ENCODE measurements at regions of chr17 and their contacts with region 1.

Region 1: GRCh38 chr17:40168262-40168832 is 8.9 kb upstream of the RAPGEFL1 start:
- DNase-seq: peak in 7 of 9 experiments; percentile 6 to 83 (median 47)
- ATAC-seq: peak; percentile 92
- H3K4me3 ChIP-seq: no peak overlapping the region
- H3K4me3 Mint-ChIP-seq: no peak overlapping the region
- H3K27ac ChIP-seq: no peak overlapping the region
- H3K27ac Mint-ChIP-seq: peak overlapping the region; percentile 80
- H3K4me1 ChIP-seq: peaks cover 4% of the 10 kb centered on the region
- H3K4me1 Mint-ChIP-seq: peaks cover 9% of the 10 kb centered on the region
- H3K27me3 ChIP-seq: no peaks in the 10 kb centered on the region
- H3K27me3 Mint-ChIP-seq: no peaks in the 10 kb centered on the region
- CTCF ChIP-seq: peak; percentile 79

Region 2: GRCh38 chr17:39863918-39864746 is 304.2 kb before region 1 on chr17 and contains the start of gene IKZF3:
- CTCF ChIA-PET with region 1: no interaction called
- POLR2A ChIA-PET with region 1: no interaction called
- intact Hi-C with region 1: no loop called
- DNase-seq: peak; percentile 59 to 96 (median 78)
- ATAC-seq: peak; percentile 67
- H3K4me3 ChIP-seq: peak within 1 kb of the TSS; percentile 65 to 74
- H3K4me3 Mint-ChIP-seq: peak within 1 kb of the TSS; percentile 89
- H3K27ac ChIP-seq: peak within 1 kb of the TSS; percentile 92 to 94
- H3K27ac Mint-ChIP-seq: peak within 1 kb of the TSS; percentile 98
- H3K4me1 ChIP-seq: peaks cover 56% of the 10 kb centered on the region
- H3K4me1 Mint-ChIP-seq: peaks cover 61% of the 10 kb centered on the region
- H3K27me3 ChIP-seq: no peaks in the 10 kb centered on the region
- H3K27me3 Mint-ChIP-seq: no peaks in the 10 kb centered on the region
- CTCF ChIP-seq: peak; percentile 49
- total RNA-seq, gene IKZF3: 57.3 to 59.8 TPM

Region 3: GRCh38 chr17:40015005-40015997 is 153.0 kb before region 1 on chr17 and contains the start of gene CSF3:
- CTCF ChIA-PET with region 1: interaction called, 40 read pairs
- POLR2A ChIA-PET with region 1: no interaction called
- intact Hi-C with region 1: loop called (anchors 1 kb)
- DNase-seq: no peak
- ATAC-seq: no peak
- H3K4me3 ChIP-seq: no peak within 1 kb of the TSS
- H3K4me3 Mint-ChIP-seq: no peak within 1 kb of the TSS
- H3K27ac ChIP-seq: no peak within 1 kb of the TSS
- H3K27ac Mint-ChIP-seq: no peak within 1 kb of the TSS
- H3K4me1 ChIP-seq: peaks cover 5% of the 10 kb centered on the region
- H3K4me1 Mint-ChIP-seq: peaks cover 6% of the 10 kb centered on the region
- H3K27me3 ChIP-seq: no peaks in the 10 kb centered on the region
- H3K27me3 Mint-ChIP-seq: no peaks in the 10 kb centered on the region
- CTCF ChIP-seq: no peak
- total RNA-seq, gene CSF3: not detected

Region 4: DNA sequence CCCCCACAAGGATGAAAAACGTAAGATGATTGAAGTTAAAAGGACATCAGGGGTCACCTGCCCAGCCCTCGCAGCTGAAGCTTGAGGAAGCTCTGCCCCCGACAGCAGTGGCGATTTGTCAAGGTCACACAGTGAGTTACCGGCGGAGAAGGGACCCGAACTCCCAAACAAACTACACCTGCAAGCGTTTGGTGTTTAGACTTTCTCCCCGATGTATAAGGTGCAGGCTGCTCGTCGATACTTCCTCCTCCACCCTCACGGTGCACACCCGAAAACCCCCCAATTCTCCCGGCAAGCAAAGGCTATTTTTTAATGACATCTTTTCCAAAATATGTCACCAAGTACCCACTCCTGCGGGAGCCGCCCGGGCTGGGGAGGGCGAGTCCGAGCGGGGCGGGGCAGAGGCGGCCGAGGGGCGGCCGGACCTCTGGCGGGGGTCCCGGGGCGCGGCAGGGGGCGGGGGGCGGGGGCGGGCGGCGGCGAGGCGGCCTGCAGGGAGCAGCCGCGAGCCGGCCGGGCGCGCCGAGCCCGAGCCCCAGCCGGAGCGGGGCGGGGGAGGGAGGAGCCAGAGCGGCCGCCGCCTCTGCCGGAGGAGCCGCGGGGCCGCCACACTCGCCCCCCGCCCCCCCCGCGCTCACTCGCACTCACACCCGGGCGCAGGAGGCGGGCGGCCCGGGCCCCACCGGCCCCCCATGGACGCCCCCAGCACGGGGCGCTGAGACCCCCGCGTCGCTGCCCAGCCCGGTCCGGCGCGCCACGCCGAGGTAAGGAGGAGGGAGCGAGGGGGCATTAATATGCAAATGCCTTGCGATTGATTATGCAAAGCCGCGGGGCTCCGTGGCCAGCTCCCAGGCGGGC is 105.8 kb before region 1 on chr17 and contains the start of gene THRA:
- CTCF ChIA-PET with region 1: interaction called, 19 read pairs
- POLR2A ChIA-PET with region 1: interaction called, 5 read pairs
- intact Hi-C with region 1: loop called (anchors 2 to 5 kb)
- DNase-seq: peak; percentile 47 to 88 (median 71)
- ATAC-seq: peak; percentile 90
- H3K4me3 ChIP-seq: peak within 1 kb of the TSS; percentile 84 to 97
- H3K4me3 Mint-ChIP-seq: peak within 1 kb of the TSS; percentile 91
- H3K27ac ChIP-seq: peak within 1 kb of the TSS; percentile 49 to 64
- H3K27ac Mint-ChIP-seq: peak within 1 kb of the TSS; percentile 85
- H3K4me1 ChIP-seq: peaks cover 48% of the 10 kb centered on the region
- H3K4me1 Mint-ChIP-seq: peaks cover 45% of the 10 kb centered on the region
- H3K27me3 ChIP-seq: no peaks in the 10 kb centered on the region
- H3K27me3 Mint-ChIP-seq: no peaks in the 10 kb centered on the region
- CTCF ChIP-seq: no peak
- total RNA-seq, gene THRA: 34.6 to 35.7 TPM

Region 5: DNA sequence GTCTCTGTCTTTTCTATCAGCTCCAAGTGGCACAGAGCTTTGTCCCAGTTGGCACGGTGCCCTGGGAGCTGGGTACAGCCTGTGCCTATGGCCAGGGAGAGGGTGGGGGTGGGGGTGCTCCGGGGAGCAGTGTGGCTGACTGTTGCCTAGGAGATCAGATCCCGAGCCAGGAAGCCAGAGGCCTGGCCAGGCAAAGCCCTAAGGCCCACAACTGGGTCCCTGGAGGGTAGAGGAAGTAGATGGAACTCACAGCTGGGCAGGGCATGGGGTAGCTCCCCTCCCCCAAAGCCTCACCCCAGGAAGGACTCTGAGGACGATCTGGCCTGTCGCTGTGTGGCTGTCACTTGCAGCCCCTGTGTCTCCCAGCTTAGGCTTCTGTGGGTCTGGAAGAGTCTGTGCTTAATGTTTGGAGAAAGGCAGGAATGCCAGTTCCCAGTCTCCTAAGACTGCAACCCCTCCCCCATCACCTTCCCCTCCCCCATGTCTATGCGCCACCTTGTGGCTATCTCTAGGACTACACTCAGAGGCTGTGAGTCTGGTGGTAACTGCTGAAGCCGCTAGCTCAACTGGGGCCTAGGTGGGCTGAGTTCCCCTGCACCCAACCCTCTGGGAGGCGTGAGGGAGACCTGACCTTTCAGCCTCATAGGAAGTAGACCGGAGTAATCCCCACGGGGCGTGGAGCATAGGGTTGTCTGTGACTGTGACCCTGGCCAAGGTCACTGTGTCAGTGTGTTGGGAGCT is 93.0 kb before region 1 on chr17:
- CTCF ChIA-PET with region 1: interaction called, 15 read pairs
- POLR2A ChIA-PET with region 1: no interaction called
- intact Hi-C with region 1: no loop called
- DNase-seq: peak; percentile 48 to 81 (median 70)
- ATAC-seq: peak; percentile 96
- H3K4me3 ChIP-seq: no peak overlapping the region
- H3K4me3 Mint-ChIP-seq: peak overlapping the region; percentile 45
- H3K27ac ChIP-seq: no peak overlapping the region
- H3K27ac Mint-ChIP-seq: peak overlapping the region; percentile 62
- H3K4me1 ChIP-seq: peaks cover 49% of the 10 kb centered on the region
- H3K4me1 Mint-ChIP-seq: peaks cover 53% of the 10 kb centered on the region
- H3K27me3 ChIP-seq: no peaks in the 10 kb centered on the region
- H3K27me3 Mint-ChIP-seq: no peaks in the 10 kb centered on the region
- CTCF ChIP-seq: peak; percentile 90

Region 6: DNA sequence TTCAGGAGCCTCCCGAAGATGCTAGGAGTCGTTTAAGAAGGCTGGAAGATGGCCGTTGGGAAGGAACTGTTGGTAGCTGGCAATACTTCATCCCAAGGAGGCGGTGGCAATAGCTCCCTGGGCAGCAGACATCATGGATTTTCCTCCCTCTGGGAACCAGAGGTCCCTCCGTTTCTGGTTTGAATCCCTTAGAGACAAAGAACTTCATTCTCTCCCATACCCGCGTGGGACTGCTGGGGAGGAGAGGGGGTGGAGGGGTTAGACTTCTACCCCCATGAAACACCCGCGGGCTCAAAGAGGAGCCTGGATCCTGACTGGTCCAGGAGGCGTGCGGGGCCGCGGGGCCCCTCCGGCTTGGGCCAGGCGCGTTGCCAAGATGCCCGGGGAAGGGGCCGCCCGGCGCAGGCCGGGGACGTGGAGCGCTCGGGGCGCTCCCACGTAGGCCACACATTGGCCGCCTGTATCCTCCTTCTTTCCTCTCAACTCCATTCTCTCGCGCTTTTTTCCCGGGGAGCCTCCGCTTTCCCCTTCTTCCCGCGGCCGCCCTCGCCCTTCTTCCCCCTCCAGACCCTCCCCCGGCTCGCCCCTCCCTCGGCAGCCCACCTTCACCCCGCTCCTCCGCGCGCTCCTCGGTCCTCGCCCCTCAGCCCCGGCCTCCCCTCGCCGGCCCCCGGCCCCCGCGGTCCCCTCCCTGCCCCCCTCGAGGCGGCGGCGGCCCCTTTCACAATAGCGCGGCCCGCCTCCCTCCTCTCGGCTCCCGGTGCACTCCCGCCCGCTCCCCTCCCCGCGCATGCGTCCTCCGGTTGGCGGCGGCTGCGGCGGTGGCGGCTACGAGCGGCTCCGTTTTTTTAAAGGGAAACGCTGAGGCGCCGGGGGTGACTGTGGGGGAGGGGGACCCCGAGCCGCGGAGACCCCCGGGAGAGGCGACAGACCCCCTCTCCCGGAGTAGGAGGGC is 46.9 kb before region 1 on chr17 and contains the start of gene MSL1:
- CTCF ChIA-PET with region 1: interaction called, 118 read pairs
- POLR2A ChIA-PET with region 1: interaction called, 3 read pairs
- intact Hi-C with region 1: loop called in 1 of 2 experiments (anchors 2 kb)
- DNase-seq: peak; percentile 69 to 92 (median 85)
- ATAC-seq: peak; percentile 65
- H3K4me3 ChIP-seq: peak within 1 kb of the TSS; percentile 75 to 93
- H3K4me3 Mint-ChIP-seq: peak within 1 kb of the TSS; percentile 81
- H3K27ac ChIP-seq: peak within 1 kb of the TSS; percentile 40 to 71
- H3K27ac Mint-ChIP-seq: peak within 1 kb of the TSS; percentile 83
- H3K4me1 ChIP-seq: peaks cover 14% of the 10 kb centered on the region
- H3K4me1 Mint-ChIP-seq: peaks cover 44% of the 10 kb centered on the region
- H3K27me3 ChIP-seq: no peaks in the 10 kb centered on the region
- H3K27me3 Mint-ChIP-seq: no peaks in the 10 kb centered on the region
- CTCF ChIP-seq: no peak
- total RNA-seq, gene MSL1: 43.8 to 46.6 TPM

Region 7: DNA sequence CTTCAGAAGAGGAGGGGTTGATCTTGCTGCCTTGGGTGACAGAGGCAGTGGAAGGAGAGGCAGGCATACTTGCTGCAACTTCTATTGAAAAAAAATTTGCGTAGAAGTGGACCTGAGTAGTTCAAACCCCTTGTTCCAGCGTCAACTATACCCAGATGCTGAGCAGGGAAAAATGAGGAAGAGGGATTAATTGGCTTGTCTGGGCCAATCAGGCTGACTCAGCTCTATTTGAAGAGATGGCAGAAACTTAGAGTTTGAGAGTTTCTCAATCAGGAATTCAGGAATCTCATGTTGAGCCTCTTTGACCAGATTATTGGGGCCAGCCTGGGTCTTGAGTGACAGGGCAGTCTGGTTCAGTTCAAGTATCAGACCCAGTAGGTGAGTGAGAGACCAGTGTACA is 10.4 kb before region 1 on chr17:
- CTCF ChIA-PET with region 1: interaction called, 17 read pairs
- POLR2A ChIA-PET with region 1: no interaction called
- intact Hi-C with region 1: no loop called
- DNase-seq: no peak
- ATAC-seq: no peak
- H3K4me3 ChIP-seq: no peak overlapping the region
- H3K4me3 Mint-ChIP-seq: no peak overlapping the region
- H3K27ac ChIP-seq: no peak overlapping the region
- H3K27ac Mint-ChIP-seq: no peak overlapping the region
- H3K4me1 ChIP-seq: peaks cover 4% of the 10 kb centered on the region
- H3K4me1 Mint-ChIP-seq: peaks cover 36% of the 10 kb centered on the region
- H3K27me3 ChIP-seq: no peaks in the 10 kb centered on the region
- H3K27me3 Mint-ChIP-seq: no peaks in the 10 kb centered on the region
- CTCF ChIP-seq: no peak

Region 8: GRCh38 chr17:40317880-40318829 is 149.8 kb after region 1 on chr17:
- CTCF ChIA-PET with region 1: no interaction called
- POLR2A ChIA-PET with region 1: no interaction called
- intact Hi-C with region 1: no loop called
- DNase-seq: peak; percentile 88 to 96 (median 91)
- ATAC-seq: peak; percentile 61
- H3K4me3 ChIP-seq: peak overlapping the region; percentile 91 to 95
- H3K4me3 Mint-ChIP-seq: peak overlapping the region; percentile 91
- H3K27ac ChIP-seq: peak overlapping the region; percentile 94 to 97
- H3K27ac Mint-ChIP-seq: peak overlapping the region; percentile 99
- H3K4me1 ChIP-seq: peaks cover 72% of the 10 kb centered on the region
- H3K4me1 Mint-ChIP-seq: peaks cover 87% of the 10 kb centered on the region
- H3K27me3 ChIP-seq: no peaks in the 10 kb centered on the region
- H3K27me3 Mint-ChIP-seq: no peaks in the 10 kb centered on the region
- CTCF ChIP-seq: no peak

Measured in CD8-positive, alpha-beta T cell (primary cell).